ENCODE measurements at regions of chr5 and their contacts with region 1.

Region 1: GRCh38 chr5:178626484-178627258 is at the start of gene CLK4:
- DNase-seq: peak; percentile 94 to 98 (median 96)
- H3K4me3 ChIP-seq: peak within 1 kb of the TSS; percentile 79 to 96
- H3K4me3 Mint-ChIP-seq: peak within 1 kb of the TSS; percentile 95 to 100 (median 98)
- H3K27ac ChIP-seq: peak within 1 kb of the TSS; percentile 98
- H3K27ac Mint-ChIP-seq: peak within 1 kb of the TSS; percentile 99 to 100 (median 100)
- H3K4me1 ChIP-seq: peaks cover 42% of the 10 kb centered on the region
- H3K4me1 Mint-ChIP-seq: peaks cover 23 to 49% (median 33%) of the 10 kb centered on the region in 4 donors
- H3K27me3 ChIP-seq: no peaks in the 10 kb centered on the region
- H3K27me3 Mint-ChIP-seq: no peaks in the 10 kb centered on the region
- total RNA-seq, gene CLK4: 121 to 125 TPM

Region 2: DNA sequence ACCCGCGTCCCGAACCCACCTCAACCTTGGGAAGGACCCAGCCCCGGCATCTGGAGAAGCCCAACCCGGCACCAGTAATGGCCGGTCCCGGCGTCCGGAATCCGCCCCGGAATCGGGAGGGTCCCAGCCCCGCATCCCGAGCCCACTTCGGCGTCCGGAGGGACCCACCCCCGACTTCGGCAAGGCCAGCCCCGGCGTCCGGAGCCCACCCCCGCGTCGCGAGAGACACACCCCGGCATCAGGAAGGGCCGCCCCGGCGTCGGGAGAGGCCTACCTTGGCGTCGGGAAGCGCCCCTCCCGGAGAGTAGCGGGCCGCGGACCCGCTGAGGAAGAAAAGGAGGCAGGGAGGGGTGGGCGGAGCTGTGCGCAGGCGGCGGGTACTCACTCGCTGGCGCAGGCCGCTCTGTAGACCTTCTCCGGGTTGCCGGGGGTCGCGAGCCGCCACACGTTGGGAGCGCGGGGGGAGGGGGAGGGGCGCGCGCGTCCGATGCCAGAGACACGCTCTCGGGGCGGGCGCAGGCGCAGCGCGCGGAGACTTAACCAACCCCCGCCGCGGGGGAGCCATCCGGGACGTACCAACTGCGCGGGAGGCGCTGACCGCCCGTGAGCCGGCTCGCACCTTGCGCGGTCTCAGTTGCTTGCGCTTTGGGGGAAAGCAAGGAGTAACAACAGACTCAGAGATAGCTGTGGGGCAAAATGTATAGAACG is 1620.3 kb before region 1 on chr5 and contains the start of gene UIMC1:
- CTCF ChIA-PET with region 1: no interaction called
- POLR2A ChIA-PET with region 1: no interaction called
- intact Hi-C with region 1: loop called (anchors 5 kb)
- DNase-seq: peak; percentile 89 to 91 (median 89)
- H3K4me3 ChIP-seq: peak within 1 kb of the TSS; percentile 57 to 62
- H3K4me3 Mint-ChIP-seq: peak within 1 kb of the TSS; percentile 93 to 96 (median 94)
- H3K27ac ChIP-seq: peak within 1 kb of the TSS; percentile 86
- H3K27ac Mint-ChIP-seq: peak within 1 kb of the TSS; percentile 91 to 97 (median 94)
- H3K4me1 ChIP-seq: peaks cover 23% of the 10 kb centered on the region
- H3K4me1 Mint-ChIP-seq: peaks cover 22 to 34% (median 28%) of the 10 kb centered on the region in 4 donors
- H3K27me3 ChIP-seq: no peaks in the 10 kb centered on the region
- H3K27me3 Mint-ChIP-seq: no peaks in the 10 kb centered on the region
- total RNA-seq, gene UIMC1: 57.1 to 61.7 TPM

Region 3: GRCh38 chr5:178732281-178732680 is 105.6 kb after region 1 on chr5:
- CTCF ChIA-PET with region 1: interaction called, 7 read pairs
- POLR2A ChIA-PET with region 1: interaction called, 5 read pairs
- intact Hi-C with region 1: loop called (anchors 1 kb)
- DNase-seq: no peak
- H3K4me3 ChIP-seq: no peak overlapping the region
- H3K4me3 Mint-ChIP-seq: peak overlapping the region in 2 of 8 donors; percentile 25 to 55
- H3K27ac ChIP-seq: no peak overlapping the region
- H3K27ac Mint-ChIP-seq: peak overlapping the region in 2 of 7 donors; percentile 28 to 73
- H3K4me1 ChIP-seq: peaks cover 5% of the 10 kb centered on the region
- H3K4me1 Mint-ChIP-seq: peaks cover 6 to 15% (median 7%) of the 10 kb centered on the region in 4 donors
- H3K27me3 ChIP-seq: no peaks in the 10 kb centered on the region
- H3K27me3 Mint-ChIP-seq: no peaks in the 10 kb centered on the region

Region 4: GRCh38 chr5:179023528-179024430 is 397.1 kb after region 1 on chr5 and contains the start of gene ZNF879:
- CTCF ChIA-PET with region 1: no interaction called
- POLR2A ChIA-PET with region 1: interaction called, 3 read pairs
- intact Hi-C with region 1: loop called (anchors 2 kb)
- DNase-seq: peak; percentile 93 to 95 (median 94)
- H3K4me3 ChIP-seq: peak within 1 kb of the TSS; percentile 54 to 61
- H3K4me3 Mint-ChIP-seq: peak within 1 kb of the TSS; percentile 92 to 99 (median 96)
- H3K27ac ChIP-seq: peak within 1 kb of the TSS; percentile 66
- H3K27ac Mint-ChIP-seq: peak within 1 kb of the TSS; percentile 82 to 95 (median 93)
- H3K4me1 ChIP-seq: peaks cover 13% of the 10 kb centered on the region
- H3K4me1 Mint-ChIP-seq: peaks cover 8 to 20% (median 11%) of the 10 kb centered on the region in 4 donors
- H3K27me3 ChIP-seq: no peaks in the 10 kb centered on the region
- H3K27me3 Mint-ChIP-seq: peaks cover 2 to 3% of the 10 kb centered on the region in 2 donors
- total RNA-seq, gene ZNF879: 15.9 to 16.3 TPM

Region 5: DNA sequence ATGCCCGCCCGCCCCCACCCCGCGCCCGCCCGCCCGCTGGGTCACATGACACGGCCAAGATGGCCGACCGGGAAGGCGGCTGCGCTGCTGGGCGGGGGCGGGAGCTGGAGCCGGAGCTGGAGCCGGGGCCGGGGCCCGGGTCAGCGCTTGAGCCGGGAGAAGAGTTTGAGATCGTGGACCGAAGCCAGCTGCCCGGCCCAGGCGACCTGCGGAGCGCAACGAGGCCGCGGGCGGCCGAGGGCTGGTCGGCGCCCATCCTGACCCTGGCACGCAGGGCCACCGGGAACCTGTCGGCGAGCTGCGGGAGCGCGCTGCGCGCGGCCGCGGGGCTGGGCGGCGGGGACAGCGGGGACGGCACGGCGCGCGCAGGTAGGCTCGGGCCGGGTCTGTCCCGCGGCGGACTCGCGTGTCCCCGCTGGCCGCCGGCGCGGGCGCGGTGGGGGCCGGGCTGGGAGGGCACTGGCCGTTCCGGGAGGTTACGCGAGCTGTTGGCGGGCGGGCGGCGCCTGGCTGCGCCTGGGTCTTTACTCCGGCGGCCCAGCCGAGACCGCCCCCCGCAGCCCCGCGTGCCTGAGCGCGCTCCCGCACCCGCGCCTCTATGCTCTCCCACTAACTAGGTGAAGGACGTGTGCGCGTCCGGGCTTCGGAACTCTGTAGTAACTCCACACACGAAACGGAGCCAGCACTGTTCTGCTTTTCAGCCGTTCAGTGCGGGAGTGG is 924.0 kb after region 1 on chr5 and contains the start of gene RUFY1:
- CTCF ChIA-PET with region 1: no interaction called
- POLR2A ChIA-PET with region 1: interaction called, 7 read pairs
- intact Hi-C with region 1: loop called (anchors 5 kb)
- DNase-seq: peak; percentile 81 to 92 (median 87)
- H3K4me3 ChIP-seq: peak within 1 kb of the TSS; percentile 78 to 91
- H3K4me3 Mint-ChIP-seq: peak within 1 kb of the TSS; percentile 94 to 99 (median 96)
- H3K27ac ChIP-seq: peak within 1 kb of the TSS; percentile 66
- H3K27ac Mint-ChIP-seq: peak within 1 kb of the TSS; percentile 94 to 99 (median 97)
- H3K4me1 ChIP-seq: peaks cover 30% of the 10 kb centered on the region
- H3K4me1 Mint-ChIP-seq: peaks cover 17 to 45% (median 27%) of the 10 kb centered on the region in 4 donors
- H3K27me3 ChIP-seq: no peaks in the 10 kb centered on the region
- H3K27me3 Mint-ChIP-seq: no peaks in the 10 kb centered on the region
- total RNA-seq, gene RUFY1: 59.1 to 61.5 TPM

Measured in CD4-positive, alpha-beta memory T cell (primary cell).